PC-3 (cell line): ENCODE measurements at regions of chr1 and their contacts with region 1.

Region 1: GRCh38 chr1:214685906-214686305 is 82.9 kb downstream of the CENPF start:
- DNase-seq: no peak
- ATAC-seq: no peak
- H3K4me3 ChIP-seq: no peak overlapping the region
- H3K27ac ChIP-seq: no peak overlapping the region
- H3K4me1 ChIP-seq: no peaks in the 10 kb centered on the region
- H3K27me3 ChIP-seq: no peaks in the 10 kb centered on the region
- CTCF ChIP-seq: no peak

Region 2: GRCh38 chr1:214707306-214708087 is 21.6 kb after region 1 on chr1:
- CTCF ChIA-PET with region 1: no interaction called
- POLR2A ChIA-PET with region 1: no interaction called
- intact Hi-C with region 1: no loop called
- DNase-seq: no peak
- ATAC-seq: no peak
- H3K4me3 ChIP-seq: no peak overlapping the region
- H3K27ac ChIP-seq: no peak overlapping the region
- H3K4me1 ChIP-seq: peaks cover 9% of the 10 kb centered on the region
- H3K27me3 ChIP-seq: no peaks in the 10 kb centered on the region
- CTCF ChIP-seq: no peak

Region 3: GRCh38 chr1:214857716-214858115 is 171.8 kb after region 1 on chr1:
- CTCF ChIA-PET with region 1: no interaction called
- POLR2A ChIA-PET with region 1: interaction called, 10 read pairs
- intact Hi-C with region 1: no loop called
- DNase-seq: peak; percentile 61
- ATAC-seq: peak; percentile 31; the same call in 1 of the 2 replicates
- H3K4me3 ChIP-seq: no peak overlapping the region
- H3K27ac ChIP-seq: no peak overlapping the region
- H3K4me1 ChIP-seq: peaks cover 21% of the 10 kb centered on the region
- H3K27me3 ChIP-seq: no peaks in the 10 kb centered on the region
- CTCF ChIP-seq: no peak